Ovary (tissue), 10 donors: ENCODE measurements at regions of chr14 and their contacts with region 1.

Region 1: DNA sequence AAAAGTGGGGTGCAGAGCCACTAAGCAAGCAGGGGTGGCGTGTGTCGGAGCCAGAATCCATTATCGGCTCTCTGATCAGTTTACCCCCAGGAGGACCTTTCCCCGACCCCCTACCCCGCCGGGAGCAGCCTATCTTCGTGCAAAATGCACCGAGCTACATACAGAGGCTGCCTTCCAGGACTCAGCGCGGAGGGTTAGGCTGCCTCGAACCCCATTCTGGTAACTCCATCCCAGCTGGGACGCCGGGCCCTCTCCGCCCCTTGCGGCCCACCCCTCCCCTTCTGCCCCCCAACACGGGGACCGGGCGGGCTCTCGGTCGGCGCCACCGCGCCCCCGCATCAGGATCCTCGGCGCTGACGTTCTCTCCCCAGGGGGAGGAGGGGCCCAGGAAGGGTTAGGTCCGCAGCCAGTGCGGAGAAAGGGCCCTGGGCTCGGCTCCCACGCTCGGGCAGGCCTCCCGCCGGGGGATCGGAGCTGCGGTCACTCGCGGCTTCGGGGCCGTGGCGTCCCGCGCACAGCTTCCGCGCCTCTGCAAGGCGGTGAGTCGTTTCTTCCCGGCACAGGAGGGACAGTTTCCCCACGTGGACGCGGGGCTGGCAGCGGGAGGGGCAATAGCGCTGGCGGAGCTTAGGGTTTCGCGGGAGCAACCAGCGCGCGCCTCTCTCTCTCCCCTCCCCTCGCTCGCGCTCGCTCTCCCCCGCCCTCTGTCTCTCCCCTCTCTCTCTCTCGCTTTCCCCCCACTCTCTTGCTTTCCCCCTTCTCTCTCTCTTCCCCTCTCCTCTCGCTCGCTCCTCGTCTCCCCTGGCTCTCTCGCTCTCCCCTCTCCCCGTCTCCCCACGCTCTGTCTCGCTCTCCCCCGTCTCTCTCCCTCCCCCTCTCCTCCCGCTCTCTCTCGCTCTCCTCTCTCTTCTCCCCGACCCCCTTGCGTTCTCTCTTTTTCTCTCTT is 12.5 kb upstream of the MAP3K9 start:
- DNase-seq: peak; percentile 59 to 75 (median 69)
- H3K4me3 ChIP-seq: peak overlapping the region; percentile 43
- H3K27ac ChIP-seq: peak overlapping the region in 1 of 2 donors; percentile 42
- H3K4me1 ChIP-seq: peaks cover 2% of the 10 kb centered on the region
- H3K27me3 ChIP-seq: no peaks in the 10 kb centered on the region
- CTCF ChIP-seq: no peak
- EP300 ChIP-seq: no peak
- POLR2A ChIP-seq: peak; percentile 32

Region 2: DNA sequence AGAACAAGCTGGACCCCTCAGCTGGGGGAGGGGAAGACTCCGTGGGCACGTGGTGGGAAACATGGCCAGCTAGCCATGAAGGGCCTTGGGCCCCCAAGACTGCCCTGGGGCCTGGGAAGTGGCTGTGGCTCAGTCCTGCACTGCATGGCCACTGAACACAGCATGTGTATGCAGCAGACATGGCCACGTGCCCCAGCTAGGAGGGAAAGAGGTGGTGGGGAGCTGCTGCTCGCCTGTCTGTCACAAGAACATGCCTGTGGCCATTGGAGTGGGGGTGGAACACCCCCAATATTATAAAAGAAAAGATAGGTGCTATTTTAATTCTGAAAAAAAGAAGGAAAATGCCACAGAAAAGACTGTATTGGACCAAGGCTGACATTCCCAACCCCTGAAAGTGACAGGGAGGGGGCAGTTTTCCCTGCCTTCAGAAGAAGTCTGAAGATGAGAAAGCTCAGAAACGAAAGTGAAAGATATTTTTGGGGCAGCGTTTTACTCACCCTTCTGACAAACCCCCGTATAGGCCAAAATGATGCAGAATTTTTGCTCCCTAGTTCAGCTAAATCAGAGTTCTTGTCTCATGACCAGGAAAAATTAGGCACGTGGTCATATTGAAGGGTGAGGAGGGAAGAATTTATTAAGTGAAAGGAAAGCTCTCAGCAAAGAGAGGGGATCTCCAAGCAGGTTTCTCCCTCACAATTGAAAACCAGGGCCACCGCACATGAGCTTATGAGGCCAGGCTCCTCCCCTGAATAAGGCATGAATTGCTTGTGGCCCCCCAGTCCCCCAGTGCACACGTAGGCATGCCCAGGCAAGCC is 50.2 kb after region 1 on chr14:
- intact Hi-C with region 1: no loop called
- DNase-seq: no peak
- H3K4me3 ChIP-seq: no peak overlapping the region
- H3K27ac ChIP-seq: no peak overlapping the region
- H3K4me1 ChIP-seq: no peaks in the 10 kb centered on the region
- H3K27me3 ChIP-seq: no peaks in the 10 kb centered on the region
- CTCF ChIP-seq: no peak
- EP300 ChIP-seq: no peak
- POLR2A ChIP-seq: no peak

Region 3: GRCh38 chr14:70907176-70907995 is 85.5 kb after region 1 on chr14 and contains the start of gene PCNX1:
- intact Hi-C with region 1: loop called in 1 of 4 experiments (anchors 5 kb)
- DNase-seq: peak; percentile 90 to 94 (median 93)
- H3K4me3 ChIP-seq: peak within 1 kb of the TSS; percentile 98
- H3K27ac ChIP-seq: peak within 1 kb of the TSS; percentile 92 to 95
- H3K4me1 ChIP-seq: peaks cover 15% of the 10 kb centered on the region
- H3K27me3 ChIP-seq: no peaks in the 10 kb centered on the region
- CTCF ChIP-seq: peak; percentile 84 to 95 (median 94)
- EP300 ChIP-seq: no peak
- POLR2A ChIP-seq: peak; percentile 58
- total RNA-seq, gene PCNX1: 49.5 to 101 (median 74.3) TPM